CD4-positive, alpha-beta T cell (primary cell): ENCODE measurements at regions of chr6 and their contacts with region 1.

Region 1: GRCh38 chr6:30616811-30617564 is at the start of gene PPP1R10:
- DNase-seq: peak; percentile 93 to 100 (median 98)
- ATAC-seq: peak; percentile 70
- H3K4me3 ChIP-seq: peak within 1 kb of the TSS; percentile 76
- H3K4me3 Mint-ChIP-seq: peak within 1 kb of the TSS; percentile 100
- H3K27ac ChIP-seq: peak within 1 kb of the TSS; percentile 94 to 98
- H3K27ac Mint-ChIP-seq: peak within 1 kb of the TSS; percentile 99
- H3K4me1 ChIP-seq: peaks cover 34% of the 10 kb centered on the region
- H3K4me1 Mint-ChIP-seq: peaks cover 32% of the 10 kb centered on the region
- H3K27me3 ChIP-seq: no peaks in the 10 kb centered on the region
- H3K27me3 Mint-ChIP-seq: peaks cover 5% of the 10 kb centered on the region
- CTCF ChIP-seq: no peak
- total RNA-seq, gene PPP1R10: 92.2 to 95.3 TPM

Region 2: GRCh38 chr6:28802417-28803336 is 1814.3 kb before region 1 on chr6:
- CTCF ChIA-PET with region 1: no interaction called
- POLR2A ChIA-PET with region 1: no interaction called
- intact Hi-C with region 1: no loop called
- DNase-seq: no peak
- ATAC-seq: no peak
- H3K4me3 ChIP-seq: no peak overlapping the region
- H3K4me3 Mint-ChIP-seq: no peak overlapping the region
- H3K27ac ChIP-seq: no peak overlapping the region
- H3K27ac Mint-ChIP-seq: no peak overlapping the region
- H3K4me1 ChIP-seq: no peaks in the 10 kb centered on the region
- H3K4me1 Mint-ChIP-seq: no peaks in the 10 kb centered on the region
- H3K27me3 ChIP-seq: peaks cover 44 to 56% of the 10 kb centered on the region in 2 experiments
- H3K27me3 Mint-ChIP-seq: peaks cover 85% of the 10 kb centered on the region
- CTCF ChIP-seq: no peak

Region 3: GRCh38 chr6:30483677-30484279 is 133.2 kb before region 1 on chr6:
- CTCF ChIA-PET with region 1: interaction called, 9 read pairs
- POLR2A ChIA-PET with region 1: interaction called, 14 read pairs
- intact Hi-C with region 1: loop called (anchors 2 to 5 kb)
- DNase-seq: peak in 5 of 14 experiments; percentile 17 to 78 (median 68)
- ATAC-seq: no peak
- H3K4me3 ChIP-seq: no peak overlapping the region
- H3K4me3 Mint-ChIP-seq: no peak overlapping the region
- H3K27ac ChIP-seq: no peak overlapping the region
- H3K27ac Mint-ChIP-seq: no peak overlapping the region
- H3K4me1 ChIP-seq: peaks cover 36% of the 10 kb centered on the region
- H3K4me1 Mint-ChIP-seq: peaks cover 44% of the 10 kb centered on the region
- H3K27me3 ChIP-seq: peaks cover 18 to 28% of the 10 kb centered on the region in 2 experiments
- H3K27me3 Mint-ChIP-seq: peaks cover 42% of the 10 kb centered on the region
- CTCF ChIP-seq: peak; percentile 94

Region 4: DNA sequence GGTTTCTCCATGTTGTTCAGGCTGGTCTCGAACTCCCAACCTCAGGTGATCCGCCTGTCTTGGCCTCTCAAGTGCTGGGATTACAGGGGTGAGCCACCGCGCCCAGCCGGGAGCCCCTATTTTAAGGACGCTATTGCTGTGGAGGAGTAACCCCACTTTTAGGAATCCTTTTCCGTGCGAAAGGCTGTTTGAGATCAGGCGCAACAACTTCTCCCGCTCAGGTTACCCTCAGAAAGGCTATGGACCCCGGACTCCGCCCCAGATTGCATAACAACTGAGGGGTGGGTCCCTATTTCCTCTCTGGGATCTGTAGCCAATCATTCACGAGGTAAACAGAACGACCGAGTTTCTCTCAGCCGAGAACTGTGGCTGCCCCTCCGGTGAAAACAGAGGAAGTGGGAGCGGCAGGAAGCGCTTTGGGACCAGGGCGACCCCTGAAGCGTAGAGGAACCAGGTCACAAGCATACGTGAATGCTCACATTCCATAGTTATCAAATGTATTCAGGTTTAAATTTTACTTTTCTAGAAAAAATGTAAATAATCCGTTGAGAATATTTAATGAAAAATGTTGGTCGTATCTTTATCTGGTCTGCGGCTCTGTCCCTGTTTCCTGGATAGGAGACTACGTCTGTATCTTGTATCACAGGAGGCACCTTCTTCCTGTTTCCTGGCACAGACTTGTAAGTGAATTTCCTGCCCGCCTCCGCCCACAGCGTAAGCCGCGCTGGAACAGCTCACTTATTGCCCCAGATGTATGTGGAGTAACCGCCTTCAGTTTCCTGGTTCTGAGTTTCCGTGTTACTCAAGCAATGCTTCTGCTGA is 100.8 kb before region 1 on chr6:
- CTCF ChIA-PET with region 1: no interaction called
- POLR2A ChIA-PET with region 1: interaction called, 18 read pairs
- intact Hi-C with region 1: no loop called
- DNase-seq: peak; percentile 78 to 98 (median 87)
- ATAC-seq: peak; percentile 84
- H3K4me3 ChIP-seq: peak overlapping the region; percentile 55
- H3K4me3 Mint-ChIP-seq: peak overlapping the region; percentile 89
- H3K27ac ChIP-seq: peak overlapping the region; percentile 92 to 98
- H3K27ac Mint-ChIP-seq: peak overlapping the region; percentile 99
- H3K4me1 ChIP-seq: peaks cover 83% of the 10 kb centered on the region
- H3K4me1 Mint-ChIP-seq: peaks cover 69% of the 10 kb centered on the region
- H3K27me3 ChIP-seq: no peaks in the 10 kb centered on the region
- H3K27me3 Mint-ChIP-seq: no peaks in the 10 kb centered on the region
- CTCF ChIP-seq: no peak

Region 5: DNA sequence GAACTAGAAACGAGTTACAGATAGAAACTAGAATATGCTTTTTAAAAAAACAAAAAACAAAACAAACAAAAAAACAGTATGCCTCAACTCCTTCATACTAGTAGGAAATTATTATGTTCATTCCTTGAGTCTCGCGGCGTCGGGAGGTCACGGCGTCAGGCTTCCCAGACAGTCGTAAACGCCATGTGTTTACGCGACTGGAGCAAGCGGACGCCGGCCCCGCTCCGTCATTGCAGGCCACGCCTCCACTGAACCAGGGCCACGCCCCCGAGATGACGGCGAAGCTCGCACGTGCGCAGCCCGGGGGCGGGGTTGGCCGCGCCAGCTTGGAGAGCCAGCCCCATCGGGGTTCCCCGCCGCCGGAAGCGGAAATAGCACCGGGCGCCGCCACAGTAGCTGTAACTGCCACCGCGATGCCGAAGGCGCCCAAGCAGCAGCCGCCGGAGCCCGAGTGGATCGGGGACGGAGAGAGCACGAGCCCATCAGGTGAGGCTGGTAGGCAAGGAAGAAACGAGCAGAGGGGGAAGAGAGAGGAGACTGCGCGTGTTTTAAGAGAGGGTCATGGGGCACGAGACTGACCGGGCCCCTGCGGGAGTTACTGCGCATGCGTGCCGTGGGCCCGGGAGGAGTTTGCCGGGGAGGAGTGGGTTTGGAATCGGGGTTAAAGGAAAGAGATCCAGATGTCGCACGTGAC is 45.8 kb before region 1 on chr6 and contains the start of gene ABCF1:
- CTCF ChIA-PET with region 1: interaction called, 5 read pairs
- POLR2A ChIA-PET with region 1: interaction called, 43 read pairs
- intact Hi-C with region 1: loop called (anchors 1 kb)
- DNase-seq: peak; percentile 97 to 100 (median 99)
- ATAC-seq: peak; percentile 90
- H3K4me3 ChIP-seq: peak within 1 kb of the TSS; percentile 82
- H3K4me3 Mint-ChIP-seq: peak within 1 kb of the TSS; percentile 100
- H3K27ac ChIP-seq: peak within 1 kb of the TSS; percentile 94 to 98
- H3K27ac Mint-ChIP-seq: peak within 1 kb of the TSS; percentile 98
- H3K4me1 ChIP-seq: peaks cover 47% of the 10 kb centered on the region
- H3K4me1 Mint-ChIP-seq: peaks cover 56% of the 10 kb centered on the region
- H3K27me3 ChIP-seq: no peaks in the 10 kb centered on the region
- H3K27me3 Mint-ChIP-seq: no peaks in the 10 kb centered on the region
- CTCF ChIP-seq: no peak
- total RNA-seq, gene ABCF1: 86.1 to 88.0 TPM

Region 6: GRCh38 chr6:30600451-30600961 is 16.5 kb before region 1 on chr6:
- CTCF ChIA-PET with region 1: interaction called, 22 read pairs
- POLR2A ChIA-PET with region 1: interaction called, 135 read pairs
- intact Hi-C with region 1: no loop called
- DNase-seq: no peak
- ATAC-seq: no peak
- H3K4me3 ChIP-seq: no peak overlapping the region
- H3K4me3 Mint-ChIP-seq: no peak overlapping the region
- H3K27ac ChIP-seq: peak overlapping the region; percentile 29 to 37
- H3K27ac Mint-ChIP-seq: peak overlapping the region; percentile 58
- H3K4me1 ChIP-seq: peaks cover 14% of the 10 kb centered on the region
- H3K4me1 Mint-ChIP-seq: peaks cover 35% of the 10 kb centered on the region
- H3K27me3 ChIP-seq: no peaks in the 10 kb centered on the region
- H3K27me3 Mint-ChIP-seq: no peaks in the 10 kb centered on the region
- CTCF ChIP-seq: no peak

Region 7: GRCh38 chr6:30678964-30679726 is 62.2 kb after region 1 on chr6:
- CTCF ChIA-PET with region 1: interaction called, 10 read pairs
- POLR2A ChIA-PET with region 1: interaction called, 24 read pairs
- intact Hi-C with region 1: loop called in 1 of 2 experiments (anchors 5 kb)
- DNase-seq: peak; percentile 84 to 96 (median 94)
- ATAC-seq: peak; percentile 41
- H3K4me3 ChIP-seq: peak overlapping the region; percentile 99
- H3K4me3 Mint-ChIP-seq: peak overlapping the region; percentile 98
- H3K27ac ChIP-seq: peak overlapping the region; percentile 41 to 98
- H3K27ac Mint-ChIP-seq: peak overlapping the region; percentile 94
- H3K4me1 ChIP-seq: peaks cover 49% of the 10 kb centered on the region
- H3K4me1 Mint-ChIP-seq: peaks cover 47% of the 10 kb centered on the region
- H3K27me3 ChIP-seq: no peaks in the 10 kb centered on the region
- H3K27me3 Mint-ChIP-seq: no peaks in the 10 kb centered on the region
- CTCF ChIP-seq: peak; percentile 91